ENCODE measurements at regions of chr10 and their contacts with region 1.

Region 1: GRCh38 chr10:48656241-48656913 is 28.3 kb upstream of the WDFY4 start:
- DNase-seq: no peak
- H3K4me3 ChIP-seq: peak overlapping the region; percentile 62
- CTCF ChIP-seq: peak; percentile 100

Region 2: GRCh38 chr10:48384699-48384982 is 271.7 kb before region 1 on chr10:
- CTCF ChIA-PET with region 1: interaction called, 15 read pairs
- POLR2A ChIA-PET with region 1: no interaction called
- DNase-seq: no peak
- H3K4me3 ChIP-seq: no peak overlapping the region
- CTCF ChIP-seq: no peak

Region 3: DNA sequence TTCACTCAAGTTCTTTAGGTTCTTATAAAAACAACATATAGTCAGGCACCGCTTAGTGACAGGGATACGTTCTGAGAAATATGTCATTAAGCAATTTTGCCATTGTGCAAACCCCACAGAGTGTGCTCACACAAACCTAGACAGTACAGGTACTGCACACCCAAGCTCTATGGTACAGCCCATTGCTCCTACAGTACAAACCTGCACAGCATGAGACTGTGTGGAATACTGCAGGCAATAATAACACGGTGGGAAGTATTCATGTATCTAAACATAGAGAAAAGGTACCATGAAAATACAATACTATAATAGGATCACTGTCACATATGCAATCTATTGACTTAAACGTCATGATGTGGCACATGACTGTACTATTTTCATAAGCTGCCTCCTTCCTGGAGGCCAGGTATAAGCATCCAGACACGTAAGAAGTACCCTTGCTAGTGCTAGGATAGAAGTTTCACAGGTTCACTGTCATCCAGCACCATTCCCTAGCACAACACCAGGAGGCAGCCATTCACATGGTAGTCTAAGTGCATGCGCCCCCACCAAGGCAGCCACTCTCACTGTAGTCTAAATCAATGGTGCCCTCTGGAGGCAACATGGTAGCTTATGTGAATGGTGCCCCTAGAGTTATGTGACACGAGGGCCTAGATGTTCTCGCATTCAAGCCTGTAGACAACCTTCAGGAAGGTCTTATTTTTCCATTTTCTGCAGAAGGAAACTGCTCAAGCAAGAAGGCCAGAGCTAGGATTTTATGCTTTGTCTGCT is 150.0 kb before region 1 on chr10:
- CTCF ChIA-PET with region 1: interaction called, 29 read pairs
- POLR2A ChIA-PET with region 1: no interaction called
- DNase-seq: no peak
- H3K4me3 ChIP-seq: no peak overlapping the region
- CTCF ChIP-seq: peak; percentile 45

Region 4: DNA sequence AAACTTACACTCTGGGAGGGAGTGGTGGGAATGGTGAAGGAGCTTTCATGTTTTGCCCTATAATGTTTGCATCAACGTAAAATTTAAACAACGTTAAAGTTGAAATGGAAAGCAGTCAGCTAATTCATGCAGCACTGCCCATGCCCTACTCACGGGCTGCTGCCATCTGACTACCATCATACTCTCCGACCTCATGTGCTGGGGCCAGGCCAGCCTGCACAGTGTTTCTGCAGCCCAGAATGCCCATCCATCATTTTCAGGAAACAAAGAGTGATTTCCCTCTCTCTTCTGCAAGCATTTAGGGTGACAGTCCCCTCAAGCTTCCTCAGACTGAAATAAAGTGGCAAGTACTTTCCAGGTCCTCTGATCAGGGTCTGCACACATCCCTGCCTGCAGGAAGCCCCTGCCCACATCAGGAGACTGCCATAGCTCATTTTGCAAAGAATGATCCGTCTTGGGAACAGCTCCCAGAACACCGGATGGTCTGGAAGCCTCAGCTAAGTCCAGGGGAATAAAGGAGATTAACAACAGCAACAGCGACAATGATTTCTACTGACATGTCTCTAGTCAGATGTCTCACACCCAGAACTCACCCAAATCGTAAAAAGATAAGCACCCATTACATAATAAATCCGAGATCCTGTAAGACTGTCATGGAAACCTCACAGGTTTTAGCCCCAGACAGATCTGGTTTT is 91.8 kb before region 1 on chr10:
- CTCF ChIA-PET with region 1: interaction called, 1,051 read pairs
- POLR2A ChIA-PET with region 1: no interaction called
- DNase-seq: no peak
- H3K4me3 ChIP-seq: no peak overlapping the region
- CTCF ChIP-seq: no peak

Region 5: DNA sequence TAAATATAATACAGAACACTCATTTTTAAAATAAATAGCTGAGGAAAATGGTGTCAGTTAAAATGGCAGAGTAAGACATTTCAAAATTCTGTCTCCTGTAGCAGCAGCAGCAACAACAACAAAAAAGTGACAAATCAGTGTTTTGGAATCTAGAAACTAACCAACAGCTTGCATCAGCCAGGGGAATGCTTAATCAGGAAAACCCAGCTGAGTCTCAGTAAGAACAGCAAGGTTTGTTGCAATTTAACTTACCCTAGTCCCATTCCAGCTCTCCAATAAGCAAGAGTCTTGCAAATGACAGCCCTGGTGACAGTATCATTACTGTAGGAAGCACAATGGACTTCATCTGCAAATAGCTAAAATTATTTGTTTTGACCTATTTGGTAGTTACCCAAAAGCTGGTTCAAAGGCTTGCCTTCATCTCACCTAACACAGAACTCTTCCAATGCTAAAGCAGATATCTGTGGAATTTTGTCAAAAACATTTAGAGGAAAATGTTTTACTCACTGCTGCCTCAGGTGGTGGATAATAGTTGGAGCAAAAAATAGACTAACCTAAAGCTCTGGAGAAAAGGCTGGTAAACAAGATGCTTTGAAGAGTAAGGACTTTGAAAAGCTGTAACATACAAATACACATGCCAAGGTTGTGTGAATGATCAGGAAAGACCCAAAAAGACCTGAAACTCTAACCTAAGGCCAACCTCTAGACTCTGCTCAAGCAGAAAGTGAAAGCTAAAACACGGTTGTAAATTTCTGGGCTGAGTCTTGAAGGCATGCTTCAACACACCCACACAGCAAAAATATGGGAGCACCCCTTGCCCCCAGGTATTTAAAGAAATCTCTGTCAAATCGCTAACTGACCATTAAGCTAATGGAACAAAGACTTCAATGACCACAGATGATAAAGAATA is 41.6 kb before region 1 on chr10:
- CTCF ChIA-PET with region 1: interaction called, 124 read pairs
- POLR2A ChIA-PET with region 1: no interaction called
- DNase-seq: no peak
- H3K4me3 ChIP-seq: no peak overlapping the region
- CTCF ChIP-seq: peak; percentile 1

Region 6: GRCh38 chr10:49407552-49408137 is 751.3 kb after region 1 on chr10:
- CTCF ChIA-PET with region 1: interaction called, 22 read pairs
- POLR2A ChIA-PET with region 1: no interaction called
- DNase-seq: peak; percentile 5
- H3K4me3 ChIP-seq: no peak overlapping the region
- CTCF ChIP-seq: peak; percentile 96

Region 7: DNA sequence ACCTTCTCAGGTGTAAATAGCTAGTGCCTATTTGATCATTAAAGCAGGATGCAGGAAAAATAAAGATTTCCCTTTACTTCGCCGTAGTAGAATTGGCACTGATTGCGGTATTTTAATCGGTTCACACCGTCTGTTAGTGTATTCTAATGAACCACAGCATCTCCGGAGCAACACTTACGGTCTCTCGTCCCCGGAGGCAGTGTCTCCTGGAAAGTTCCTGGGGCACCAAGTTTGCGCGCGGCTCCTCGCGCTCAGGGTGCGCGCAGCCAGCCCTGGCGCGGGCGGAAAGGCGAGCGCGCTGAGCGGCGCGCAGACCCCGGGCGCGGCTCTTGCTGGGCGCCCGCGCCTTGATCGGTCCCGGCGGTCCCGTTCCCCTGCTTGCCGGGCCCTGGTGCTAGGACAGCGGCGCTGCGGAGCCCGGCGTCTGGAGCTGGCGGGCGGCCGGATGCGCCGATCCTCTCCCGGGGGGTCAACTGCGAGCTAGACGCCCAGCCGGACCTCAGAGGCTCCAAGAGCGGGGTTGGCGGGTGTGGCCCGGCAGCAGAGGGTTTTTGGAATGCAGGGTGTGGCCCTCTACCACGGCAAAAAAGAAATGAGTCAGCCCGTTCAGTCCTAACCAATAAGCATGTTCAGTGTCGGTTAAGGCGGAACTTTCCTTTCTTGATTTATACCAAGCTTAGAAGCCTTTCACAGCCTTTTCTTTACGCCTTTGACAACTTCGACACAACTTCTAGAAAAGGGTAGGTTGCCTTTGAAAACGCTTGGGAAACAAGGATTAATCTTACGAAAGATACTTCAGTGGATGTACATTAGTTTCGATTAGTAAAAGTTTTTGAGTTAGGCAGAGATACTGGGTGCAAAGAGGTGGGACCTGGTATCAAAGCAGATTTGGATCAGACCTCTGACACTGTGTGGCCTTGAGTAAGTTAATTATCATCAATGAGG is 1761.8 kb after region 1 on chr10:
- CTCF ChIA-PET with region 1: no interaction called
- POLR2A ChIA-PET with region 1: no interaction called
- DNase-seq: no peak
- H3K4me3 ChIP-seq: peak overlapping the region; percentile 70
- CTCF ChIP-seq: peak; percentile 0

Measured in AG04449 (cell line).